Aorta (tissue), 5 donors: ENCODE measurements at regions of chr7 and their contacts with region 1.

Region 1: GRCh38 chr7:106736508-106737201 is 75.7 kb upstream of the CCDC71L start:
- DNase-seq: no peak
- ATAC-seq: peak; percentile 75
- H3K4me3 ChIP-seq: no peak overlapping the region
- H3K27ac ChIP-seq: no peak overlapping the region
- H3K4me1 ChIP-seq: peaks cover 0 to 3% of the 10 kb centered on the region in 2 donors
- H3K27me3 ChIP-seq: no peaks in the 10 kb centered on the region

Region 2: DNA sequence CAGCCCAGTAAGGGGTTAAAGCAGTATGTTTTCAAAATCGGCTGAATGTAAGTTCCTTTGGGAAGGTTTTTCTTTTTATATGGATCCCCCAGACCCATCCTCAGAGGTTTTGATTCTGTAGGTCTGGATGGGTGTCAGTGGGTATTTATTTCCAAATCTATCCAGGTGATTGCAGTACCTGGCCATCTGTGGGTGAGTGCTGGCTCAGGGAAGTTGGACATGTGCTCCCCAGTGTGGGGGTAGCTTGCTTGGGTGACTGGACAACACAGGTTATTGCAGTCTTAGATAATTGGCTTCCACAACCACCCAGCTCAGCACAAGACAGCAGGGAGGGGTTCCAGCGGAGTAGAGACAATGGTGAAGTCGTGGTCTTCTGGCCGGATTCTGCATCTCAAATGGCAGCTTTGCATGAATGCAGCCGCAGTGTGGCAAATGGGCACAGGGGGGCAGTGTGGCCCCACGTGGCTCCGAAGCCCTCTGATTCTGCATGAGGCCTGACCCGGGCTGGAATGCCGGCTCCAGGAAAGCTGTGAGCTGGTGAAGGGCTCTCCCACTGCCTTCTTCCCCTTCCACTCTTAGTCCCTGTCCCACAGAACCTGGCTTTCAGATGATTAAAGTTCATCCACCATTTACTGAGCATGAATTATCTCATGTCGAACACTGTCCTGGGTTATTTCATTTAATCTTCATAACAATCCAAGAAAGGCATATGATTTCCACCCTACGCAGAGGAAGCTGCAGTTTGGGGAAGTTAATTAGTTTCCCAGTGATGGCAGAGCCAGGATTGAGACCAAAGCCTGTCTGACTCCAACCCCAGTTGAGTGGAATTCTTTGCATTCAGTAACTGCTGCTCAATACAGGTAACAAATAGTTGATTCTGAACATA is 560.0 kb before region 1 on chr7:
- intact Hi-C with region 1: loop called in 1 of 2 experiments (anchors 10 kb)
- DNase-seq: peak; percentile 87 to 95
- ATAC-seq: peak; percentile 93
- H3K4me3 ChIP-seq: no peak overlapping the region
- H3K27ac ChIP-seq: no peak overlapping the region
- H3K4me1 ChIP-seq: no peaks in the 10 kb centered on the region
- H3K27me3 ChIP-seq: no peaks in the 10 kb centered on the region

Region 3: GRCh38 chr7:106623853-106624252 is 112.8 kb before region 1 on chr7:
- intact Hi-C with region 1: no loop called
- DNase-seq: no peak
- ATAC-seq: no peak
- H3K4me3 ChIP-seq: no peak overlapping the region
- H3K27ac ChIP-seq: no peak overlapping the region
- H3K4me1 ChIP-seq: no peaks in the 10 kb centered on the region
- H3K27me3 ChIP-seq: no peaks in the 10 kb centered on the region

Region 4: DNA sequence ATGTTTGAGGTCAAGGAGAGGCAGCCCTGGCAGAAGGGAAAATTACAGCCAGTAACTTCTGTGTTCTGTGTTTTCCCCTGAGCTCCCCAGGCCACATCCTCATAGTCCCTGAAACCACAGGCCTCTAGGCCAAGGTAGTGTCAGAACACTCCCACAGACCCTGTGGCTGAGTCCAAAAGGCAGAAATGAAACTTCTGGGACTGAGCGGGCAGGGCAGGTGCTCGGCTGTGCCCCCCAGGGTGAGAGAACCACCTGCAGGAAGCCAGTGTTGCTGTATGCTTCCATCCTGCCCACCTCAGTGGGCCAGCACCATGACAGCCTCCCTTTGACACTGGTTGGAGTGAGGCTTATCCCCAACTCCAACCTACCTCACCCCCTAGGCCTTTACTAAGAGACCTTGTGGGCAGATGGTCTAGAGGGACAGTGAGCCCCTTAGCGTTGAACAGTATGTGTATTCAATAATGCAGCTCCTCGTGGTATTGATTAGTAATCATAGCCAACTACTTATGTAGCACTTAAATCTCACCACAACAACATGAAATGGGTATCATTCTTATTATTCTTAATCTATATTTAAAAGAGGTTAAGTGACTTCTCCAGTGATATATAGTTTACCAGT is 158.7 kb after region 1 on chr7:
- intact Hi-C with region 1: no loop called
- DNase-seq: no peak
- ATAC-seq: no peak
- H3K4me3 ChIP-seq: no peak overlapping the region
- H3K27ac ChIP-seq: no peak overlapping the region
- H3K4me1 ChIP-seq: no peaks in the 10 kb centered on the region
- H3K27me3 ChIP-seq: no peaks in the 10 kb centered on the region